Activated CD4-positive, alpha-beta T cell treated with anti-CD3 and anti-CD28 coated beads, Interleukin-2, amount 10 ng/mL, durations not matched to agents 24 days and 14 days (primary cell): ENCODE measurements at regions of chr1 and their contacts with region 1.

Region 1: GRCh38 chr1:23344111-23344986 is at the start of gene HNRNPR:
- DNase-seq: peak; percentile 99
- H3K4me3 Mint-ChIP-seq: peak within 1 kb of the TSS; percentile 90
- H3K27ac Mint-ChIP-seq: peak within 1 kb of the TSS; percentile 99
- H3K4me1 Mint-ChIP-seq: peaks cover 35% of the 10 kb centered on the region
- H3K27me3 Mint-ChIP-seq: no peaks in the 10 kb centered on the region
- total RNA-seq, gene HNRNPR: 229 and 235 TPM in 2 replicates

Region 2: GRCh38 chr1:22976461-22977243 is 367.7 kb before region 1 on chr1:
- intact Hi-C with region 1: no loop called
- DNase-seq: peak; percentile 86
- H3K4me3 Mint-ChIP-seq: no peak overlapping the region
- H3K27ac Mint-ChIP-seq: no peak overlapping the region
- H3K4me1 Mint-ChIP-seq: peaks cover 4% of the 10 kb centered on the region
- H3K27me3 Mint-ChIP-seq: peaks cover 23% of the 10 kb centered on the region

Region 3: GRCh38 chr1:23330846-23331245 is 13.5 kb before region 1 on chr1:
- intact Hi-C with region 1: no loop called
- DNase-seq: no peak
- H3K4me3 Mint-ChIP-seq: no peak overlapping the region
- H3K27ac Mint-ChIP-seq: peak overlapping the region; percentile 48
- H3K4me1 Mint-ChIP-seq: peaks cover 30% of the 10 kb centered on the region
- H3K27me3 Mint-ChIP-seq: no peaks in the 10 kb centered on the region

Region 4: DNA sequence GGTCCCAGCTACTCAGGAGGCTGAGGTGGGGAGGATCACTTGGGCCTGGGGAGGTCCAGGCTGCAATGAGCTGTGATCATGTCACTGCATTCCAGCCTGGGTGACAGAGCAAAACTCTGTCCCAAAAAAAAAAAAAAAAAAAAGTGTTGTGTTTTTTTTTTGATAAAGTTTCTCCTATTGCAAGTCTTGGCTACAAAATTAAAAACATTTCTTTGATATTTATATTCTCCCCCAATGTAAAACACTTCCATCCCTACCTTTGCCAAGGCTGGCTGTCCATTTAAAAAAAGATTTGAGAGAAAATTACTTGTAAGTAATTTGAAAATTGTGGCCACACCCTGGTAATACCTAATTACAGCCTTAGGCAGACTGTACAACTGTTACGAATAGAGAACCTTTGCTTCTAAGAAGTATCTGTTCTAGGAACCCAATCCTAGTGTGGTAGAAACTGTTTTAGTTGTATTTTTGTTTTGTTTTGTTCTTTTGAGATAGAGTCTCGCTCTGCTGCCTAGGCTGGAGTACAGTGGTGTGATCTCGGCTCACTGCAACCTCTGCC is 14.0 kb after region 1 on chr1:
- intact Hi-C with region 1: loop called (anchors 1 kb)
- DNase-seq: no peak
- H3K4me3 Mint-ChIP-seq: no peak overlapping the region
- H3K27ac Mint-ChIP-seq: no peak overlapping the region
- H3K4me1 Mint-ChIP-seq: peaks cover 4% of the 10 kb centered on the region
- H3K27me3 Mint-ChIP-seq: no peaks in the 10 kb centered on the region

Region 5: GRCh38 chr1:23367791-23368561 is 23.6 kb after region 1 on chr1:
- intact Hi-C with region 1: loop called (anchors 1 kb)
- DNase-seq: peak; percentile 99
- H3K4me3 Mint-ChIP-seq: peak overlapping the region; percentile 94
- H3K27ac Mint-ChIP-seq: peak overlapping the region; percentile 99
- H3K4me1 Mint-ChIP-seq: peaks cover 33% of the 10 kb centered on the region
- H3K27me3 Mint-ChIP-seq: no peaks in the 10 kb centered on the region

Region 6: GRCh38 chr1:23403735-23404486 is 59.6 kb after region 1 on chr1:
- intact Hi-C with region 1: loop called (anchors 2 kb)
- DNase-seq: peak; percentile 96
- H3K4me3 Mint-ChIP-seq: no peak overlapping the region
- H3K27ac Mint-ChIP-seq: no peak overlapping the region
- H3K4me1 Mint-ChIP-seq: peaks cover 7% of the 10 kb centered on the region
- H3K27me3 Mint-ChIP-seq: no peaks in the 10 kb centered on the region

Region 7: DNA sequence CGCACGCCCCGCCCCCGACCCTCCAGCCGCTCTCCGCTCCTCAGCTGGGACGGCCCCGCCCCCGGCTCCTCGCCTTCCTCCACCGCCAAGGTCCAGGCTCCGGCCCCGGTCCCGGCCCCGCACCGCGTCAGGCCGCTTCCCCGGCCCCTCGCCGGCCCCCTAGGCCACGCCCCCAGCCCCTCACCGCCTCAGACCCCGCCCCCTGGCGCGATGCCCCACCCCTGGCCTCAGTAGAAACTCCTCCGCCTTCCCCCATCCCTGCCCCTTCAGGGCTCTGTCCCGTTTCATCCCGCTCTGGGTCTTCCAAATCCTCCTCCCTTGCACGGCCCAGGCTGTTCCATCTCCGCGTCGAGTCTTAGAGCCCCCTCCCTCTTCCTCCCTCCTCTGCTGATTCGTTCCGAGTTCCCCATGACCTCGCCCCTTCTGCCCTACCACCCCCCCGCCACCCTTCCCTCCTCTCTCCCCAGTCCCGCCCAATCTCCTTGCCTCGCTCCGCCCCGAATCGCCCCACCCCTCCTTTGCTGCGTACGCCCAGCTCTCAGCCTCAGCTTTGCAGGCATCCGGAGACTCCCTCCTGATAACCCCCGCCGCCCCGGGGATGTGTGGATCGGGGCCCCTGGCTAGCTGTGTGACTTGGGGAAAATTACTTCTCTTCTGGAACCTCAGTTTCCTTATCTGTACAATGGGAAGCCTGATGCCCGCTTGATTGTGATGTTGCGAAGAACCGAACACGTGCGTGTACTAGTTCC is 140.1 kb after region 1 on chr1:
- intact Hi-C with region 1: loop called (anchors 5 kb)
- DNase-seq: peak; percentile 96
- H3K4me3 Mint-ChIP-seq: peak overlapping the region; percentile 89
- H3K27ac Mint-ChIP-seq: peak overlapping the region; percentile 27
- H3K4me1 Mint-ChIP-seq: peaks cover 17% of the 10 kb centered on the region
- H3K27me3 Mint-ChIP-seq: peaks cover 65% of the 10 kb centered on the region

Region 8: GRCh38 chr1:23530747-23531561 is 186.6 kb after region 1 on chr1 and contains the start of gene E2F2:
- intact Hi-C with region 1: loop called (anchors 5 kb)
- DNase-seq: peak; percentile 94
- H3K4me3 Mint-ChIP-seq: peak within 1 kb of the TSS; percentile 87
- H3K27ac Mint-ChIP-seq: peak within 1 kb of the TSS; percentile 95
- H3K4me1 Mint-ChIP-seq: peaks cover 63% of the 10 kb centered on the region
- H3K27me3 Mint-ChIP-seq: no peaks in the 10 kb centered on the region
- total RNA-seq, gene E2F2: 30.4 and 33.7 TPM in 2 replicates

Region 9: GRCh38 chr1:23959041-23959460 is 614.7 kb after region 1 on chr1:
- intact Hi-C with region 1: loop called (anchors 10 kb)
- DNase-seq: peak; percentile 97
- H3K4me3 Mint-ChIP-seq: peak overlapping the region; percentile 100
- H3K27ac Mint-ChIP-seq: peak overlapping the region; percentile 100
- H3K4me1 Mint-ChIP-seq: peaks cover 47% of the 10 kb centered on the region
- H3K27me3 Mint-ChIP-seq: no peaks in the 10 kb centered on the region